PC-3 (cell line): ENCODE measurements at regions of chr4 and their contacts with region 1.

Region 1: DNA sequence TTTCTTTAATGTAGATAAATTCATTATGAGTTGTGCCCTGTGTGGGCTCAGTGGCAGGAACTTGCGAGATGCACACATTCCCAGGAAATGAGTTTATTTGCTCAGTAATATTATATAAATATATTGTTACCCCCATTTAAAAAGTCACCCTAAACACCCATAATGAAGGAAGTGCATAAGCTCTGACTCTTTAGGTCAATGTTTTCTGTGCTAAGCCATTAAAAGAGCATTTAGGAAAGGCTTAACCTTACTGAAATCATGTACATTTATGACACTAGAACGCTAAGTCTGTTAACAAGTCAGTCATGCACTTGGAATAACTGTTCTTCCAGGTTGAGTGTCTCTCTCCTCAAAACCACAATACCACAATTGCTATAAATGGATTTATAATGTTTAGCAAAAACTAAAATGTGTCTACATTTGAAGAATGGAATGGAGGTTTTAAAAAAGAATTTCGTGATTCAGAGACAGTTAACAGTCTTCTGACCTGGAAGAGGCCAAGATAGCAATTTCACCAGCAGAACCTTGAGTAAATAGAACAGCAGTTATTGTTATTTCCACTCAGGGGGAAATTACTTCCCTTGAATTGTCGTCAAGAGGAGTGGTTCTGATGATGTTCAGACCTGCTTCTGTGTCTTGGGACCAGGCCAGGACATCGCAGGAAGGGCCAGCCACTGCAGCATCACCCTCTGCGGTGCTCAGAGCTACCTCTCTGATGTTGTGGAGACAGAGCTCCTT is 91.1 kb upstream of the VEGFC start:
- DNase-seq: peak; percentile 93
- ATAC-seq: peak; percentile 77
- H3K4me3 ChIP-seq: peak overlapping the region; percentile 36
- H3K27ac ChIP-seq: peak overlapping the region; percentile 99
- H3K4me1 ChIP-seq: peaks cover 44% of the 10 kb centered on the region
- H3K27me3 ChIP-seq: no peaks in the 10 kb centered on the region
- CTCF ChIP-seq: no peak

Region 2: GRCh38 chr4:176377780-176378179 is 506.1 kb before region 1 on chr4:
- CTCF ChIA-PET with region 1: no interaction called
- POLR2A ChIA-PET with region 1: no interaction called
- intact Hi-C with region 1: loop called (anchors 1 kb)
- DNase-seq: peak; percentile 59
- ATAC-seq: peak; percentile 63
- H3K4me3 ChIP-seq: no peak overlapping the region
- H3K27ac ChIP-seq: peak overlapping the region; percentile 56
- H3K4me1 ChIP-seq: peaks cover 13% of the 10 kb centered on the region; the same call in 1 of the 2 replicates
- H3K27me3 ChIP-seq: no peaks in the 10 kb centered on the region
- CTCF ChIP-seq: peak; percentile 71

Region 3: GRCh38 chr4:176538217-176538925 is 345.5 kb before region 1 on chr4:
- CTCF ChIA-PET with region 1: no interaction called
- POLR2A ChIA-PET with region 1: no interaction called
- intact Hi-C with region 1: no loop called
- DNase-seq: peak; percentile 80
- ATAC-seq: peak; percentile 92
- H3K4me3 ChIP-seq: 0 out of 2 replicates have a peak overlapping the region, but pooled peaks have one; percentile 23
- H3K27ac ChIP-seq: peak overlapping the region; percentile 97
- H3K4me1 ChIP-seq: peaks cover 40% of the 10 kb centered on the region
- H3K27me3 ChIP-seq: no peaks in the 10 kb centered on the region
- CTCF ChIP-seq: no peak

Region 4: DNA sequence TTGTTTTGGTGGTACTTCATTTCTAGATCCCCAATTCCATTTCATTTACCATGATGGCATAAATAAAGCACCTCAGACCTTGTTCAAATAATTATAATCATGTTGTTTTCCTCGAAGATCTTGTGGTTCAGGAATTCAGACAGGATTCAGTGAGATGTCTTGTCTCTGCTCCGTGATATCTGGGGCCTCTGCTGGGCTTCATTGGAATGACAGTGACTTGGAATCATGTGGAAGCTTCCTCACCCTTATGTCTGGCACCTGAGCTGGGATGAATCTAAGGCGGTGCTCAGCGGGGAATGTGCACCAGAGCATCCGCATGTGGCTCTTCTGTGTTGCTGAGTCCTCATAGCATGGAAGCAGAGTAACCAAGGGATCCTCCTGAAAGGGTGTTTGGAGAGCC is 223.3 kb before region 1 on chr4:
- CTCF ChIA-PET with region 1: no interaction called
- POLR2A ChIA-PET with region 1: no interaction called
- intact Hi-C with region 1: no loop called
- DNase-seq: peak; percentile 46
- ATAC-seq: peak; percentile 62
- H3K4me3 ChIP-seq: no peak overlapping the region
- H3K27ac ChIP-seq: no peak overlapping the region
- H3K4me1 ChIP-seq: no peaks in the 10 kb centered on the region
- H3K27me3 ChIP-seq: no peaks in the 10 kb centered on the region
- CTCF ChIP-seq: peak; percentile 47

Region 5: DNA sequence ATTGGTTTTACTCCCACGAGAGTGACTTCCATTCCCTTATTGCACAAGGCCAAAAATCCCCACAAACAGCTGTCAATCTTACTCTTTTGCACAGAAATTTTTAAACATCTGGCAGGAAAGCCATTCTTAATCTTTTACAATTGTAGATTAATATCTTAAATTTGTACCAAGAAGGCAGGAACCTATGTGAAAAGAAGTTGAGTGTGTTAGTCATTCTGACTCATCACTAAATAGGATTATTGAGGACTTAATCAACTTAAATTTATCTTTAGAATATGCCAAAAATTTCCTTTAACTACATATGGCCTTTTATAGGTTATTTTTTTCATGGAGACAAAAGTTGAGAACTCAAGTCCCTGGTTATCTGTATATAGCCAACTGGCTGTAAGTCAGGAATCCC is 42.1 kb before region 1 on chr4:
- CTCF ChIA-PET with region 1: no interaction called
- POLR2A ChIA-PET with region 1: no interaction called
- intact Hi-C with region 1: loop called (anchors 1 kb)
- DNase-seq: peak; percentile 84
- ATAC-seq: peak; percentile 59
- H3K4me3 ChIP-seq: no peak overlapping the region
- H3K27ac ChIP-seq: peak overlapping the region; percentile 90
- H3K4me1 ChIP-seq: peaks cover 73% of the 10 kb centered on the region
- H3K27me3 ChIP-seq: no peaks in the 10 kb centered on the region
- CTCF ChIP-seq: no peak

Region 6: DNA sequence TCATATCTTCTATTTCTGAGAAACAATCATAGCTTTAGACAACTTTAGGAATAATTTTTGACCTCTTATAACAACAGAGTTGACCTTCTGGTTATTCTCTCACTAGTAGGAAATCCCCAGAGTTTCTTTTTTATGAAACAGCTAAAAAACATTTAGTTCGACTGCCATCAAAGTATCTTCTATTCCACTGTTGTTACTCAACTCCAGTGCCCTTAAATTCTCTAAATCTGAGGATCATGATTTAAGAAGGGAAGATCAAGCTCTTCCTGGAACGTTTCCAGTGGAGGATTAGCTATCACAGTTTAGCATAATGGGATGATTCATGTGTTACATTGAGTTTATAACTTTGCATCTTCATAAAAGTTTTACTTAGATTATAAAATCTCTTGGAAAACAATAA is 43.8 kb after region 1 on chr4:
- CTCF ChIA-PET with region 1: no interaction called
- POLR2A ChIA-PET with region 1: no interaction called
- intact Hi-C with region 1: loop called (anchors 5 kb)
- DNase-seq: peak; percentile 70
- ATAC-seq: peak; percentile 59
- H3K4me3 ChIP-seq: no peak overlapping the region
- H3K27ac ChIP-seq: peak overlapping the region; percentile 4
- H3K4me1 ChIP-seq: peaks cover 18% of the 10 kb centered on the region; the same call in 1 of the 2 replicates
- H3K27me3 ChIP-seq: no peaks in the 10 kb centered on the region
- CTCF ChIP-seq: no peak

Region 7: DNA sequence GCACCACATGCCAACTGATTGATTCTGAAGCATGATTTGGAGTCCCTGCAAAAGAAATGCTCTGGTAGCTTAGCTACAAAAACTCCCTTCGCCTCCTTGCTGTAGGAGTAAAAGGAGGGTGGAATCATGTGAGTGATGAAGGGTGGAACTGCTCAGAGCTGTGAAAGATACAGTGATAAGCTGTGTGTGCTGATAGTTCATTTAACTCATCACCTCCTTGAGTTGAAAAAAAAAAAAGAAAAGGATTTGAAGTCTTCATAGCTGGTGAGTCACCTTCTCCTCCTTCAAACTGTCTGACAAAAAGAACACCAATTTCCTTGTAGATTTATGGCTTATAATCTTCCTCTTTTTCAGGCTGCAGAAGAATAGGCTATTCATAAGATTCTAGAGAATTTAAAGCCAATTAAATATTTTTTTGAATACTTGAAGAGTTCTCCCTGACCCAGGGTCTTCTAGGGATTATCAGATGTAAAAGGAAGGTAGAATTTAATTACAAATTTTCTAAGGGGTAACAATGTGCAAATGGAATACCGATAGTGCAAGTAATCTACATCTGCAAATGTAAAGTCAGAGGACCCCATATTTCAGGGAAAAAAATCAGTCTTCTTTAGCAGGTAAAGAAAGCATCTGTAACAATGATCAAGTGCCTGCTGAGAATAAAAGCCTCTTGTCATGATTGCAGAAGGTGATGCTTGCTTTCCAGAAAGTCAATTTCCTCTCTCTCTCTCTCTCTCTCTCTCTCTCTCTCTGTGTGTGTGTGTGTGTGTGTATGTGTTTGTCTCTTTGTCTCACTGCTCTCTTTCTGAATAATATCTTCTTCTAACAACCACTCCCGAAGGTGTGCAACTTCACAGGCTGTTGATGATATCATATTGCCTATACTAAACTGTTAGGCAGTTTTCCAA is 117.7 kb after region 1 on chr4:
- CTCF ChIA-PET with region 1: no interaction called
- POLR2A ChIA-PET with region 1: no interaction called
- intact Hi-C with region 1: loop called (anchors 1 kb)
- DNase-seq: peak; percentile 62
- ATAC-seq: peak; percentile 23
- H3K4me3 ChIP-seq: no peak overlapping the region
- H3K27ac ChIP-seq: peak overlapping the region; percentile 99
- H3K4me1 ChIP-seq: peaks cover 49% of the 10 kb centered on the region
- H3K27me3 ChIP-seq: no peaks in the 10 kb centered on the region
- CTCF ChIP-seq: no peak

Region 8: GRCh38 chr4:177220376-177220775 is 336.5 kb after region 1 on chr4:
- CTCF ChIA-PET with region 1: no interaction called
- POLR2A ChIA-PET with region 1: no interaction called
- intact Hi-C with region 1: no loop called
- DNase-seq: peak; percentile 47
- ATAC-seq: peak; percentile 31; the same call in 1 of the 2 replicates
- H3K4me3 ChIP-seq: no peak overlapping the region
- H3K27ac ChIP-seq: no peak overlapping the region
- H3K4me1 ChIP-seq: no peaks in the 10 kb centered on the region
- H3K27me3 ChIP-seq: no peaks in the 10 kb centered on the region
- CTCF ChIP-seq: no peak